Esophagus squamous epithelium (tissue), 5 donors: ENCODE measurements at regions of chr9 and their contacts with region 1.

Region 1: GRCh38 chr9:36560857-36561221 is 11.9 kb upstream of the MELK start:
- DNase-seq: no peak
- H3K4me3 ChIP-seq: no peak overlapping the region
- H3K27ac ChIP-seq: no peak overlapping the region
- H3K4me1 ChIP-seq: peaks cover 0 to 2% (median 0%) of the 10 kb centered on the region in 3 donors
- H3K27me3 ChIP-seq: no peaks in the 10 kb centered on the region
- CTCF ChIP-seq: no peak
- POLR2A ChIP-seq: no peak

Region 2: GRCh38 chr9:36407122-36407723 is 153.6 kb before region 1 on chr9:
- intact Hi-C with region 1: loop called (anchors 5 kb)
- DNase-seq: no peak
- H3K4me3 ChIP-seq: no peak overlapping the region
- H3K27ac ChIP-seq: no peak overlapping the region
- H3K4me1 ChIP-seq: peaks cover 0 to 21% (median 4%) of the 10 kb centered on the region in 3 donors
- H3K27me3 ChIP-seq: no peaks in the 10 kb centered on the region
- CTCF ChIP-seq: peak; percentile 91 to 96 (median 94)
- POLR2A ChIP-seq: no peak

Region 3: DNA sequence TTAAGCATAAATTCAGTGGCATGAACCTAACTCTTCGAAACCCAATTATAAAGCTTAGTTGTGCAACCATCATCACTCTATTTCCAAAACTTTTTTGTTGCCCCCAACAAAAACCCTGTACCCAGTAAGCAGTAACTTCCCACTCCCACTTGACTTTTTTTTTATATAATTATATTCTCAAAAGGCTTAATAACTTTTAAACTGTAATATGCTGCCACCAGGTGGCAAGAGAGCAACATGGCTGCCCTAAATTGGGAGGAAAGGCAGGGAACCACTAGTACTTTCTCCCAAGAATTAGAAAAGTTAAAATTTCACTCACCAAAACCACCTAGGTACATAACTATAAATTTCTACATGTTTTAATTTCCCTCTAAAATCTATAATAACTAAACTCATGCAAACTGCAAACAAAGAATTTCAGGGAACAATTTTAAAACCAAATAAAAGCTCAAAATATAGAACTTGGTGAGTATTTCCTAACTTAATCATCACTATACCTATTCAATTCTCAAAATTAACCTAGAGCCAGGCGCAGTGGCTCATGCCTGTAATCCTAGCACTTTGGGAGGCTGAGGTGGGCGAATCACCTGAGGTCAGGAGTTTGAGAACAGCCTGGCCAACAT is 110.6 kb before region 1 on chr9:
- intact Hi-C with region 1: loop called (anchors 5 kb)
- DNase-seq: no peak
- H3K4me3 ChIP-seq: no peak overlapping the region
- H3K27ac ChIP-seq: no peak overlapping the region
- H3K4me1 ChIP-seq: peaks cover 0 to 6% (median 0%) of the 10 kb centered on the region in 3 donors
- H3K27me3 ChIP-seq: no peaks in the 10 kb centered on the region
- CTCF ChIP-seq: peak; percentile 62 to 75 (median 64)
- POLR2A ChIP-seq: no peak